HepG2 (cell line): ENCODE measurements at regions of chr11 and their contacts with region 1.

Region 1: DNA sequence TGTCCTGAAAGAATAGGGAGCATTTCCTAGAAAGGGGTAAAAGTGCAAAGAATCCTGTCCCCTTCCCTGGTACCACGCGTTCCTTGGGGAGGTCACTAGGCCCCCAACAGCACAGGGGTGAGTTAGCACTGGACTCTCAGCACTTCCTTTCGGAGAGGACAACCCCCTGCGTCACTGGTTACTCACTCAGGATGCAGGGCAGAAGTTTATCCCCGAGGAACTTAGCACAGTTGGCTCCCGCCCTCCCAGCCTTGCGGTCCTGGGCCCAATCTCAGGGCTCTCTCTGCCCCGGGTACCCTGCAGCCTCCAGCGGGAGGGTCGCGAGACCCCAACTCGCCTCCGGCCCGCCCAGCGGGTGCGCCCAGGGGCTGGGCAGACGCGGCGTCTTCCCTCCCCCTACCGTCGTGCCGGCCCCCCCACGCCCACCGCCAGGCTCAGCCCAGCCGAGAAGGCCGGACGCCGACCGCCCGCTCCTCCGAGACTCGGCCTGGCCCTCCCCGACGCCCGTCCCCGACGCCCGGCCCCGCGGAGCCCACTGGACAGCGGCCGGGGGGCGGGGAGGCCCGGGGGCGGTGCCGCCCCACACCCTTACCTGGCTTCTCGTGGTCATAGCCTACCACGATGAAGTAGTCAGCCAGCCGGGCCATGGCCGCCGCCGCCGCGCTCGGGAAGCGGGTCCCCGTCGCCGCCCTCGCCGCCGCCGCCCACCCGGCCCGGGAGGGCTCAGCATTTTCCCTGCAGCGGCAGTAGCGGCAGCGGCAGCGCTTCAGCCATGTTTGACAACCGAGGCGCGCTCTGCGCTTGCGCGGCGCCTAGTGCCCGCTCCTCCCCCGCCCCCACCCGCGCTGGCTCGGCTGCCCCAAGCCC is at the start of gene SBF2:
- DNase-seq: peak; percentile 69
- ATAC-seq: peak; percentile 73
- H3K4me3 ChIP-seq: peak within 1 kb of the TSS; percentile 89 to 96 (median 90)
- H3K27ac ChIP-seq: peak within 1 kb of the TSS; percentile 88
- H3K4me1 ChIP-seq: peaks cover 60% of the 10 kb centered on the region
- H3K27me3 ChIP-seq: no peaks in the 10 kb centered on the region; a peak in 1 of 5 replicates
- CTCF ChIP-seq: no peak; the same call in 1 of the 2 replicates
- EP300 ChIP-seq: no peak
- POLR2A ChIP-seq: peak; percentile 79 to 87
- RAD21 ChIP-seq: no peak; the same call in 1 of the 2 replicates
- total RNA-seq, gene SBF2: 24.0 and 29.9 TPM in 2 replicates

Region 2: DNA sequence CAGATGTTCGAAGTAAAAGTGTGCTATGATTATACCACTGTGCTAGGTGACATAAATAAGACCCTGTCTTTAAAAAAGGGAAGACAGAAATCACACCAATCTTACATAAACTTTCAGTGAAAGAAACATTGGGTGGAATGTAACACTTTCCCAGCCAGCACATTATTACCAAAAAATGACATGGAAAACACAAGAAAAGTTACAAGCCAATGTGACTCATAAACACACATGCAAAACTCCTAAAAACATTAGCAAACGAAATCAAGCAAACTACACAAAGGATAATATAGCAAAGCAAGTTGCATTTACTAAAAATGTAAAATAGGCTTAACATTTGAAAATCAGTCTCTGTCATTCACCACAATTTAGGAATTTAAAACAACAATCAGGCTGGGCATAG is 46.6 kb before region 1 on chr11:
- CTCF ChIA-PET with region 1: no interaction called
- POLR2A ChIA-PET with region 1: no interaction called
- in situ Hi-C with region 1: no loop called
- intact Hi-C with region 1: loop called (anchors 1 kb)
- DNase-seq: no peak
- ATAC-seq: no peak
- H3K4me3 ChIP-seq: no peak overlapping the region
- H3K27ac ChIP-seq: no peak overlapping the region
- H3K4me1 ChIP-seq: no peaks in the 10 kb centered on the region
- H3K27me3 ChIP-seq: no peaks in the 10 kb centered on the region
- CTCF ChIP-seq: no peak
- EP300 ChIP-seq: no peak
- POLR2A ChIP-seq: no peak
- RAD21 ChIP-seq: no peak